Posterior vena cava (tissue), 2 donors: ENCODE measurements at regions of chr2 and their contacts with region 1.

Region 1: GRCh38 chr2:54809819-54810218 is 86.4 kb downstream of the EML6 start:
- DNase-seq: no peak

Region 2: DNA sequence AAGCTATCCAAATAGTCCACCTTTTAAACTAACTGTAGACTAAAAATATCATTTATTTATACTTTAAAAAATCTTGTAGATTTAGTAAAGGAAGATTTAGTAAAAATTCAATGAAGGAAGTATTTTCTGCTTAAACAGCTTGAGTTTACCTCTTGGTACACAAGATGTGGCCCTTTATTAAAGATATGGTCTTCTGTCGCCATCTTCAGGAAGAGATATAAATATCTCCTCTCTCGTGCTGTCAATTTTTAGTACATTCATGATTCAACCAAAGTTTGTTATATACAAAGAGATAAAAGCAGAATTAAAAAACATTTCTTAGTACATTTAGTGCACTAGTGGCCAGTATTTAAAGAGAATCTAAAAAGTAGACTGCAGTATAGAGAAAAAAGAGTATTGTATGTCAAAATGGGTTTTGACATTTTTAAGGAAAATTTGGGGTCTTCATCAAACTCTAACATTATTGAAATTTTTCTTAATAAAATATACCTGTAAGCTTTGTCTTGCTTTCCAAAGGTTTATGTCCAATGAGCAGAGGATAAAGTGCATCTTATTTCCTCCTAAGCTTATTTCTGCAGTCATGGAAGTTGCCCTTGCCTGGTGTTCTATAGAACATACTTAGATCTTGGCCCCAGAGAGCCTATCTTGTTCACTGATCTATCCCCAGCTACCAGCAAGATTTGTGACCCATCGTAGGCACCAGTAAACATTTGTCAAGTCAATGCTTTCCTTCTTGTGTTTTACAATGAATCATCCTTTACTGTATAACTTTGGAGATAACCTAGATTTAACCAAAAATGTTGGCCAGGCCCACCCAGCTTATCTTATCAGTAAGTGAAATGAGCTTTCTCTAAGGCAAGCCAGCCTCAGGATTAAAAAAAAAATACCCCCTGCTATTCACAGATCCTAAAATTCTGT is 104.9 kb before region 1 on chr2:
- intact Hi-C with region 1: no loop called
- DNase-seq: no peak

Region 3: GRCh38 chr2:54723131-54723995 is 86.5 kb before region 1 on chr2 and contains the start of gene EML6:
- intact Hi-C with region 1: loop called in 1 of 2 experiments (anchors 10 kb)
- DNase-seq: peak; percentile 99
- total RNA-seq, gene EML6: 3.2 to 12.1 TPM